PC-3 (cell line): ENCODE measurements at regions of chr9 and their contacts with region 1.

Region 1: DNA sequence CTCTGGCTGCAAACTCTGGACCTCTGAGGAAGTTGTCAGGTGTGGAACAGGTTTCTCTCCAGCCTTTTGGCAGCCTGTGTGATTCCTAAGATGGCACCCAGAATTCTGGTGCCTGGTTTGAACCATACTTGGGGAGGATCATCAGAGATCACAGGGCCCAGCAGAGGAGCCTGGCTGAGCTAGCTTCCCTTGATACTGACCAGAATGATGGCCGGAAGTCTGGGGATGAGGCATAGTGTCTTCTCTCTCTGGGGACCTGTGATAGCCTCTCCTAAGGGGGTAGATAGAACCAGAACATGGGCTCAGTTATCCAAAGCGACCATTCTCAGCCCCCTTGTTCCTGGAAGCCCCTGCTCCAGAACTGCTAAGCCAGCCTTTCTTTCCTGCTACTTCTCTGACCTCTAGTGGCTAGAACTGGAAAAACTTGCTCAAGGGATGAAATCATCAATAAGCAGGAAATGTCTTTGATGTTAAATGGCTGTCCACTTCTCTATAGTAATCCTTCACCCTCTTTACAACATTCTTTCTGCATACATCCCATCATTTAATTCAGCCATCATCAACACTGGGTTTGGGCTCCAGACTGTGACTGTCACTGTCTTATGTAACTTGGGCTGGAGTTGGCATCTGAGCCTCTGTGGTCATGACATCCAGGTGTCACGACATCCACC is 55.1 kb downstream of the C9orf152 start:
- DNase-seq: peak; percentile 65
- ATAC-seq: peak; percentile 46; the same call in 1 of the 2 replicates
- H3K4me3 ChIP-seq: no peak overlapping the region
- H3K27ac ChIP-seq: no peak overlapping the region
- H3K4me1 ChIP-seq: 0 out of 2 replicates have a peak, but pooled peaks cover 3% of the 10 kb centered on the region
- H3K27me3 ChIP-seq: no peaks in the 10 kb centered on the region
- CTCF ChIP-seq: peak; percentile 84

Region 2: DNA sequence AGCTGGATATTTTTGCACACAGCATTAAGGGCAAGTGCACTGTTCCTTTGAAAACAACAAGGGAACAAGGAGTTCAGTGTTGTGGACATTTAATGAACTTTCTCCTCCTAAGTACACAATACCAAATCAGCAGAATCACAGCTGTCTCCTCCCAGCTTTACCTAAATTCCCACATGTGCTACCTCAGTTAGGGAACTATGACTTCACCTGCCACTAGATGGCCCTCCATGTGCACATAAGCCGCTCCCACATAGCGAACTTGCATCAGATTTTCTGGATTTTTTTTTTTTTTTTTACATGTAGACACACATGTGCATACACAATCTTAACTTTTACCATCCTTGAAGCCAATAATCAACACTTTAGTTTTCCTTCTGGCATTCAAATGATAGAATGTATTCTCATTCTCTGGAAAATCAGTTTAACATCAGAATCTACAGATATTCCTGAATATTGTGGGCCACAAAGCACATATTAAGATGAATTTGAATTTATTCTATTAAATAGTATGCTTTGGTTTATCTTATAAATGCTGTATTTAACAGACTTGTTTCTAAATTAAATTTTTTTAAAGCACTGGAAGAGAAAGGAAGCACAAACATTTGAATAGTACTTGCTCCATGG is 249.2 kb before region 1 on chr9:
- CTCF ChIA-PET with region 1: interaction called, 3 read pairs
- POLR2A ChIA-PET with region 1: no interaction called
- intact Hi-C with region 1: loop called (anchors 2 kb)
- DNase-seq: peak; percentile 78
- ATAC-seq: peak; percentile 81
- H3K4me3 ChIP-seq: no peak overlapping the region
- H3K27ac ChIP-seq: no peak overlapping the region
- H3K4me1 ChIP-seq: no peaks in the 10 kb centered on the region
- H3K27me3 ChIP-seq: no peaks in the 10 kb centered on the region
- CTCF ChIP-seq: peak; percentile 89

Region 3: GRCh38 chr9:109986521-109986991 is 166.3 kb before region 1 on chr9:
- CTCF ChIA-PET with region 1: no interaction called
- POLR2A ChIA-PET with region 1: no interaction called
- intact Hi-C with region 1: loop called (anchors 10 kb)
- DNase-seq: peak; percentile 69
- ATAC-seq: peak; percentile 91
- H3K4me3 ChIP-seq: no peak overlapping the region; the same call in 1 of the 2 replicates
- H3K27ac ChIP-seq: peak overlapping the region; percentile 42
- H3K4me1 ChIP-seq: peaks cover 10% of the 10 kb centered on the region
- H3K27me3 ChIP-seq: no peaks in the 10 kb centered on the region
- CTCF ChIP-seq: no peak